CD8-positive, alpha-beta T cell (primary cell): ENCODE measurements at regions of chr1 and their contacts with region 1.

Region 1: GRCh38 chr1:37989361-37989930 is 376 bp downstream of the SF3A3 start:
- DNase-seq: peak in 5 of 9 experiments; percentile 32 to 60 (median 48)
- ATAC-seq: peak; percentile 35
- H3K4me3 ChIP-seq: peak overlapping the region; percentile 61 to 84
- H3K4me3 Mint-ChIP-seq: peak overlapping the region; percentile 99
- H3K27ac ChIP-seq: peak overlapping the region; percentile 56 to 71
- H3K27ac Mint-ChIP-seq: peak overlapping the region; percentile 95
- H3K4me1 ChIP-seq: peaks cover 15% of the 10 kb centered on the region
- H3K4me1 Mint-ChIP-seq: peaks cover 26% of the 10 kb centered on the region
- H3K27me3 ChIP-seq: no peaks in the 10 kb centered on the region
- H3K27me3 Mint-ChIP-seq: no peaks in the 10 kb centered on the region
- CTCF ChIP-seq: no peak

Region 2: GRCh38 chr1:37890378-37891014 is 99.0 kb before region 1 on chr1:
- CTCF ChIA-PET with region 1: interaction called, 5 read pairs
- POLR2A ChIA-PET with region 1: no interaction called
- intact Hi-C with region 1: loop called in 1 of 2 experiments (anchors 1 kb)
- DNase-seq: peak in 3 of 9 experiments; percentile 9 to 67 (median 56)
- ATAC-seq: peak; percentile 76
- H3K4me3 ChIP-seq: no peak overlapping the region
- H3K4me3 Mint-ChIP-seq: no peak overlapping the region
- H3K27ac ChIP-seq: peak overlapping the region in 1 of 2 experiments; percentile 22
- H3K27ac Mint-ChIP-seq: peak overlapping the region; percentile 67
- H3K4me1 ChIP-seq: peaks cover 5% of the 10 kb centered on the region
- H3K4me1 Mint-ChIP-seq: peaks cover 6% of the 10 kb centered on the region
- H3K27me3 ChIP-seq: no peaks in the 10 kb centered on the region
- H3K27me3 Mint-ChIP-seq: no peaks in the 10 kb centered on the region
- CTCF ChIP-seq: peak; percentile 80

Region 3: GRCh38 chr1:37946703-37947360 is 42.6 kb before region 1 on chr1 and contains the start of gene INPP5B:
- CTCF ChIA-PET with region 1: interaction called, 7 read pairs
- POLR2A ChIA-PET with region 1: no interaction called
- intact Hi-C with region 1: loop called in 1 of 2 experiments (anchors 1 kb)
- DNase-seq: peak; percentile 30 to 82 (median 71)
- ATAC-seq: peak; percentile 97
- H3K4me3 ChIP-seq: peak within 1 kb of the TSS; percentile 60 to 64
- H3K4me3 Mint-ChIP-seq: peak within 1 kb of the TSS; percentile 88
- H3K27ac ChIP-seq: peak within 1 kb of the TSS; percentile 14 to 56
- H3K27ac Mint-ChIP-seq: peak within 1 kb of the TSS; percentile 92
- H3K4me1 ChIP-seq: peaks cover 17% of the 10 kb centered on the region
- H3K4me1 Mint-ChIP-seq: peaks cover 18% of the 10 kb centered on the region
- H3K27me3 ChIP-seq: no peaks in the 10 kb centered on the region
- H3K27me3 Mint-ChIP-seq: no peaks in the 10 kb centered on the region
- CTCF ChIP-seq: no peak
- total RNA-seq, gene INPP5B: 11.2 to 12.7 TPM

Region 4: GRCh38 chr1:38012363-38013226 is 23.1 kb after region 1 on chr1 and contains the start of gene UTP11:
- CTCF ChIA-PET with region 1: interaction called, 69 read pairs
- POLR2A ChIA-PET with region 1: interaction called, 13 read pairs
- intact Hi-C with region 1: loop called (anchors 1 kb)
- DNase-seq: peak; percentile 80 to 97 (median 88)
- ATAC-seq: peak; percentile 86
- H3K4me3 ChIP-seq: peak within 1 kb of the TSS; percentile 66 to 94
- H3K4me3 Mint-ChIP-seq: peak within 1 kb of the TSS; percentile 99
- H3K27ac ChIP-seq: peak within 1 kb of the TSS; percentile 74 to 94
- H3K27ac Mint-ChIP-seq: peak within 1 kb of the TSS; percentile 99
- H3K4me1 ChIP-seq: peaks cover 40% of the 10 kb centered on the region
- H3K4me1 Mint-ChIP-seq: peaks cover 57% of the 10 kb centered on the region
- H3K27me3 ChIP-seq: no peaks in the 10 kb centered on the region
- H3K27me3 Mint-ChIP-seq: no peaks in the 10 kb centered on the region
- CTCF ChIP-seq: no peak
- total RNA-seq, gene UTP11: 12.8 to 14.0 TPM

Region 5: DNA sequence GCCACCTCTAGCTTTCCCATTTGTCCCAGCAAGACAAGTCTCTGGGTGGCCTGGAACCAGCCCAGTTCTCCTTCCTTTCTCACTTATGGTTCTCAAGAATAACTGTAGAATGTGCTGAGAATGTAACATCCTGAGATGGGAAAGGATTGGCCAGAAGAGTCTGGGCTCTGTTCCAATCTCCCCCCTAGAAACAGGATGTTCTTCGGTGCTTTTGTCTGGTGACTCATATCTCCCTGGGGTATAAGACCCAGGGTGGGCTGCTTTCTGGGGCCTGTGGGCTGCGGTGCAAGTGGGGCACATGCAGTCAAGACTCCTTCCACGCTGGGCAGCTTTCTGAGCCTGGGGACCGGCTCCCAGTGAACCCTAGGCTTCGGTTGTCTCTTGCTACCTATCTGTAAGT is 308.4 kb after region 1 on chr1:
- CTCF ChIA-PET with region 1: no interaction called
- POLR2A ChIA-PET with region 1: no interaction called
- intact Hi-C with region 1: no loop called
- DNase-seq: no peak
- ATAC-seq: no peak
- H3K4me3 ChIP-seq: no peak overlapping the region
- H3K4me3 Mint-ChIP-seq: no peak overlapping the region
- H3K27ac ChIP-seq: no peak overlapping the region
- H3K27ac Mint-ChIP-seq: no peak overlapping the region
- H3K4me1 ChIP-seq: no peaks in the 10 kb centered on the region
- H3K4me1 Mint-ChIP-seq: no peaks in the 10 kb centered on the region
- H3K27me3 ChIP-seq: no peaks in the 10 kb centered on the region
- H3K27me3 Mint-ChIP-seq: peaks cover 58% of the 10 kb centered on the region
- CTCF ChIP-seq: no peak

Region 6: GRCh38 chr1:38327559-38327973 is 338.1 kb after region 1 on chr1:
- CTCF ChIA-PET with region 1: no interaction called
- POLR2A ChIA-PET with region 1: no interaction called
- intact Hi-C with region 1: no loop called
- DNase-seq: no peak
- ATAC-seq: no peak
- H3K4me3 ChIP-seq: no peak overlapping the region
- H3K4me3 Mint-ChIP-seq: no peak overlapping the region
- H3K27ac ChIP-seq: no peak overlapping the region
- H3K27ac Mint-ChIP-seq: no peak overlapping the region
- H3K4me1 ChIP-seq: no peaks in the 10 kb centered on the region
- H3K4me1 Mint-ChIP-seq: no peaks in the 10 kb centered on the region
- H3K27me3 ChIP-seq: no peaks in the 10 kb centered on the region
- H3K27me3 Mint-ChIP-seq: peaks cover 28% of the 10 kb centered on the region
- CTCF ChIP-seq: no peak